PC-9 (cell line): ENCODE measurements at regions of chr7 and their contacts with region 1.

Region 1: GRCh38 chr7:141663081-141663849 is 38.7 kb downstream of the DENND11 start:
- DNase-seq: peak; percentile 89 to 97
- H3K4me3 ChIP-seq: no peak overlapping the region
- H3K27ac ChIP-seq: peak overlapping the region; percentile 96
- H3K4me1 ChIP-seq: peaks cover 34% of the 10 kb centered on the region
- H3K27me3 ChIP-seq: no peaks in the 10 kb centered on the region
- CTCF ChIP-seq: peak; percentile 29; the same call in 1 of the 2 replicates

Region 2: GRCh38 chr7:141674702-141675101 is 11.4 kb after region 1 on chr7:
- CTCF ChIA-PET with region 1: interaction called, 3 read pairs
- POLR2A ChIA-PET with region 1: no interaction called
- intact Hi-C with region 1: loop called (anchors 1 kb)
- DNase-seq: peak in 1 of 2 experiments; percentile 20
- H3K4me3 ChIP-seq: no peak overlapping the region
- H3K27ac ChIP-seq: no peak overlapping the region
- H3K4me1 ChIP-seq: no peaks in the 10 kb centered on the region; the same call in 1 of the 2 replicates
- H3K27me3 ChIP-seq: no peaks in the 10 kb centered on the region
- CTCF ChIP-seq: peak; percentile 53; the same call in 1 of the 2 replicates

Region 3: DNA sequence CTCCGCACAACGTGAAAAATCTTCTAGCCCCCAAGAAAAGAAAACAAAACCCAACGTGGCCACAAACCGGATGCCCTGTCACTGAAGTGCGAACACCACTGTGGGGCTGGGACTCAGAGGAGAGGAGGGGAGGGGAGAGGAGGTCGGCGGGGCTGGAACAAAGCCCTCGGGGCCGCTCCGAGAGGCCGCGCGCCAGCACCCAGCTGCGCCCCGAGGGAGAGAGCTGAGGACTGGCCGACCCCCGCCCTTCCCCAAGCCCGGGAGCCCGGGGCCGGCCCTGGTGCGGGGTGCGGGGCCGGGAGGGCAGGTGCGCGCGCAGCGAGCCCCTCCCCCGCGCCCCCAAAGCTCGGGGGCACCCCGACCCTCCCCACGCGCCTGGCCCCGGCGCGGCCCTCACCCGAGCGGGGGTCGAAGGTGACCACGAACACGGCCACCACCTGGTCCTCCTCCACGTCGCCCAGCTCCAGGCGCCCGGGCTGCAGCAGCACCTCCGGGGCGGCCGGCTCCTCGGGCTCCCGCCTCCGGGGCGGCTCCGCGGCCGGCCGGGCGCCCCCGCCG is 38.3 kb after region 1 on chr7:
- CTCF ChIA-PET with region 1: no interaction called
- POLR2A ChIA-PET with region 1: interaction called, 4 read pairs
- intact Hi-C with region 1: loop called (anchors 1 kb)
- DNase-seq: peak in 1 of 2 experiments; percentile 45
- H3K4me3 ChIP-seq: peak overlapping the region; percentile 84
- H3K27ac ChIP-seq: no peak overlapping the region
- H3K4me1 ChIP-seq: peaks cover 18% of the 10 kb centered on the region
- H3K27me3 ChIP-seq: no peaks in the 10 kb centered on the region
- CTCF ChIP-seq: no peak

Region 4: GRCh38 chr7:141712603-141713266 is 49.5 kb after region 1 on chr7:
- CTCF ChIA-PET with region 1: no interaction called
- POLR2A ChIA-PET with region 1: no interaction called
- intact Hi-C with region 1: no loop called
- DNase-seq: no peak
- H3K4me3 ChIP-seq: no peak overlapping the region
- H3K27ac ChIP-seq: no peak overlapping the region
- H3K4me1 ChIP-seq: no peaks in the 10 kb centered on the region
- H3K27me3 ChIP-seq: peaks cover 13% of the 10 kb centered on the region; the same call in 1 of the 2 replicates
- CTCF ChIP-seq: no peak